Tibial artery (tissue), 4 donors: ENCODE measurements at regions of chr17 and their contacts with region 1.

Region 1: GRCh38 chr17:42653179-42654124 is 5.6 kb upstream of the TUBG2 start:
- DNase-seq: peak; percentile 61 to 89
- H3K4me3 ChIP-seq: peak overlapping the region; percentile 43 to 46
- H3K27ac ChIP-seq: peak overlapping the region; percentile 80 to 86
- H3K4me1 ChIP-seq: peaks cover 0 to 14% (median 6%) of the 10 kb centered on the region in 4 donors
- H3K27me3 ChIP-seq: no peaks in the 10 kb centered on the region
- CTCF ChIP-seq: no peak

Region 2: DNA sequence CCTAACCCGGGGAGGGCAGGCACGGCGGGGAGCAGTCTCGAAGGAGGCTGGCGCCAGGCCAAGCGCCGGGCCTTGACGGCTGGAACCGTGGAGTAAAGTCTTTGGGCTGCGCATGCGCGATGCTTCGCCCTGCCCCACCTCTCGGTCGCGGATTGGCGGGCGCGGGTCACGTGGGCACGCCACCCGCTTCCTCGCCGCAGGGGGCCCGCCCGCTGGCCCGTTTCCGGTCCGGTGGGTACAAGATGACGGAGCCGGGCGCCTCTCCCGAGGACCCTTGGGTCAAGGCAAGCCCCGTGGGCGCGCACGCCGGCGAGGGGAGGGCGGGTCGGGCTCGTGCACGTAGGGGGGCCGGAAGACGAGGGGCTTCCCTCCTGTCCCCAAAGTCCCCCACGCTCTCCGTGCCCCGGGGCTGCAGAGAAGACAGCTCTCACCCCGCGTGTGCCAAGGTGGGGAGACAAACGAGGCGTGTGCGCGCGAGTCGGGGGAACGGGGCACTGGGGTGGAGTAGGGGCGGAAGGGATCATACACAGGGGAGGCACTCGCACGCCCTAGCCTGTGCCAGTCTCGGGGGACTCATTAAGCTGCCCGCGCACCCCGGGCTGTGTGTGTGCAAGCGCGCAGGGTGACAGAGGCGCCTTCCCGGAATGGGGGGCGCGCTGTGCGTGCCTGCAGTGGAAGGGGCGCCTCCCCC is 86.4 kb before region 1 on chr17 and contains the start of gene MLX:
- intact Hi-C with region 1: no loop called
- DNase-seq: peak; percentile 92 to 97
- H3K4me3 ChIP-seq: peak within 1 kb of the TSS; percentile 80
- H3K27ac ChIP-seq: peak within 1 kb of the TSS; percentile 91 to 92
- H3K4me1 ChIP-seq: peaks cover 4 to 66% (median 46%) of the 10 kb centered on the region in 4 donors
- H3K27me3 ChIP-seq: no peaks in the 10 kb centered on the region
- CTCF ChIP-seq: no peak

Region 3: DNA sequence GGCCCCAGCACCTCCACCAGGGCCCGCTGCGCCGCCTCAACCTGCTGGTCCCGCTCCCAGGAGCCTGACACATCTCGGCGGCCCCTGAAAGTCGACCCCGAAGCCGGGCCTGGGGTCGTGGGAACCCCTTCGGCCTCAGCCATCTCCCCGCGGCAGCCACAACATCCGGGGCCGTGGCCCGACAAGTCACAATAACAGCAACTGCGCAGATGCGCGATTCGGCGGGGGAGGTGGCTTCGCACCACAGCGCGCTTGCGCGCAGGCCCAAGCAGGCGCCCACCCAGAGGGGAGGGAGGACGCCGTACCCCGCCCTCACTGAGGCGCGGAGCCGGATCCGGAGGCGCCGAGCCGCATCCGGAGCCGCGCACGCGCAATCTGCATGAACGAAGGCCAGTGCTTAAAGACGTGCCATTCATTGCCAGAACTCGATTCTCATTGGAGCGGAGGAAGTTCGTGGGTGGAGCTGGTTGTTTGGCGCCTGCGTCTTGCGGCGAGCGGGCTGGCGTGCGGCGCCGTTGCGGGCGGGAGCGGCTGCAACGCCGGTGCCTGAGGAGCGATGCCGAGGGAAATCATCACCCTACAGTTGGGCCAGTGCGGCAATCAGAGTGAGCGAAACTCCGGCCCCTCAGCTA is 44.2 kb before region 1 on chr17 and contains the starts of genes RETREG3 and TUBG1:
- intact Hi-C with region 1: loop called (anchors 5 kb)
- DNase-seq: peak; percentile 98 to 99
- H3K4me3 ChIP-seq: peak within 1 kb of the TSS; percentile 69 to 85
- H3K27ac ChIP-seq: peak within 1 kb of the TSS; percentile 88 to 95
- H3K4me1 ChIP-seq: peaks cover 0 to 54% (median 33%) of the 10 kb centered on the region in 4 donors
- H3K27me3 ChIP-seq: no peaks in the 10 kb centered on the region
- CTCF ChIP-seq: peak in 1 of 2 experiments; percentile 43

Region 4: GRCh38 chr17:43634591-43635125 is 981.2 kb after region 1 on chr17:
- intact Hi-C with region 1: no loop called
- DNase-seq: no peak
- H3K4me3 ChIP-seq: no peak overlapping the region
- H3K27ac ChIP-seq: peak overlapping the region in 1 of 2 donors; percentile 11
- H3K4me1 ChIP-seq: no peaks in the 10 kb centered on the region
- H3K27me3 ChIP-seq: no peaks in the 10 kb centered on the region
- CTCF ChIP-seq: no peak